Panc1 (cell line): ENCODE measurements at regions of chr22 and their contacts with region 1.

Region 1: DNA sequence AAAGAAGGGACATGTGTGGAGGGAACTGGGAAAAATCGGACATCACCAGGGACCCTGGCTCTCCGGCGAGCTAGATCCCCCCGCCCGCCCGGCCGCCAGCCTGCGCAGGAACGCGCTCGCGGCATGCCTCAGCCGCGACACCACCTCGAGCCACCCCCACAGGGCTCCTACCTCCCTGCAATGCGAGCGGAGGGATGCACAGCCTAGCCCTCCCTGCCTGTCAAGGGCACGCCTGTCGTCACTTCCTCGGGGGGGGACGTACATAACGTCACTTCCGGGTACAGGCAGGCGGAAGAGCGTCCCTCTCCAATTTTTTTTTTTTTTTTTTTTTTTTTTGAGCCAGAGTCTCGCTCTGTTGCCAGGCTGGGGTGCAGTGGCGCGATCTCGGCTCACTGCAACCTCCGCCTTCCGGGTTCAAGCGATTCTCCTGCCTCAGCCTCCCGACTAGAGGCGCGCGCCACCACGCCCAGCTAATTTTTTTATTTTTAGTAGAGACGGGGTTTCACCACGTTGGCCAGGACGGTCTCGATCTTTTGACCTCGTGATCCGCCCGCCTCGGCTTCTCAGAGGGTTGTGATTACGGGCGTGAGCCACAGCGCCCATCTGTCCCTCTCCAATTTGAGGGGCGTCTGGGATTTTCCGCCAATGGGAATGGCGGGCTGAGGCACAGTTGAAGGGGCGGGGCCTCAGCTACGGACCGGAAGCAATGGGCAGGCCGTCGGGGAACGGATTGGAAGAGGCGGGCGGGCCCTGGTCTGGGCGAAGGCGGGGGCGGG is at the start of gene TXN2:
- DNase-seq: no peak
- ATAC-seq: peak; percentile 94
- H3K4me3 ChIP-seq: peak within 1 kb of the TSS; percentile 72 to 93
- H3K27ac ChIP-seq: peak within 1 kb of the TSS; percentile 88
- H3K4me1 ChIP-seq: peaks cover 7% of the 10 kb centered on the region
- H3K27me3 ChIP-seq: no peaks in the 10 kb centered on the region
- CTCF ChIP-seq: no peak
- total RNA-seq, gene TXN2: 64.1 TPM

Region 2: GRCh38 chr22:36350751-36351594 is 130.6 kb before region 1 on chr22:
- CTCF ChIA-PET with region 1: no interaction called
- POLR2A ChIA-PET with region 1: interaction called, 14 read pairs
- in situ Hi-C with region 1: no loop called
- intact Hi-C with region 1: no loop called
- DNase-seq: no peak
- ATAC-seq: peak; percentile 44
- H3K4me3 ChIP-seq: peak overlapping the region in 1 of 2 experiments; percentile 36; a peak in 2 of 4 replicates
- H3K27ac ChIP-seq: peak overlapping the region; percentile 99
- H3K4me1 ChIP-seq: peaks cover 89% of the 10 kb centered on the region
- H3K27me3 ChIP-seq: no peaks in the 10 kb centered on the region
- CTCF ChIP-seq: no peak

Region 3: DNA sequence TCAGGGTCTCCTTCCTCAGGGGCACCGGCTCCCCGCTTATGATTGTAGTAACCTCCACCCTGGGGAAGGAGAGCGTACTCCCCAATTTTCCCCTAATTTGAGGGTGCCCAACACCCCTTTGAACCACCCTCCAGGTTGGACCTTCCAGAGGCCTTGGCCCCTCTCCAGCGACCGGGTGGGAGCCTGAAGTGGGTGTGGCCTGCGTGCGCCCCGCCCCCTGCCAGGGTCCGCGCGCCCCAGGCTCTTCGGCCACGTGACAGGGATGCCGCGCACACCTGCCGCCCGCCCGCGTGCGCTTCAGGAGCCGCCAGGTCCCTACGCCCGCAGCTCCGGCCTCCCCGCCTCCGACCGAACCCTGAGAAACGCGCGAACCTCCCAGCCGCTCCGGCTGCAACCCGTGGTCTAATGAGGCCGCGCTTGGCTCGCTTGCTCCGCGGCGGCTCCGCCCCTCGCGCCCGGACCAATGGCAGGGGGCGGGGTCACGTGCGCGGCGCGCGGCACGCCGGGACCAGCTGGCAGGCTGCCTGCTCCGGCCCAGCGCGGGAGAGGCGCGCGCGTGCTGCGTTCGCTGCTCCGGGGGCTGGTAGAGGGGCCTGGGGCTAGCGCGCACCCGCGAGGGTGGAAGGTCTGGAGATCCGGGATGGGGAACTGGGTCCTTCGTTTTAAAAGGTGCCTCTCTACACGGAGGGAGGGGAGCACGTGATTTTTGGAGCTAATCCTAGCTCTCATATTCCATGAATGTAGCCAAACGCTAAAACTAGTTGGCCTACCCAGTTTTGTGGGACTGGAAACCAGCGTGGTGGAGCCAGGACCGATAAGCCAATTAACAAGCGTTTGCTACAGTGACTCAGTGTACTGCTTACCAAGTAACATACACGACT is 25.3 kb after region 1 on chr22 and contains the start of gene FOXRED2:
- CTCF ChIA-PET with region 1: interaction called, 11 read pairs
- POLR2A ChIA-PET with region 1: interaction called, 4 read pairs
- in situ Hi-C with region 1: no loop called
- intact Hi-C with region 1: no loop called
- DNase-seq: no peak
- ATAC-seq: peak; percentile 88
- H3K4me3 ChIP-seq: peak within 1 kb of the TSS; percentile 48 to 60
- H3K27ac ChIP-seq: peak within 1 kb of the TSS; percentile 80
- H3K4me1 ChIP-seq: no peaks in the 10 kb centered on the region
- H3K27me3 ChIP-seq: no peaks in the 10 kb centered on the region
- CTCF ChIP-seq: no peak
- total RNA-seq, gene FOXRED2: 37.7 TPM

Region 4: GRCh38 chr22:36613958-36614357 is 132.4 kb after region 1 on chr22:
- CTCF ChIA-PET with region 1: no interaction called
- POLR2A ChIA-PET with region 1: no interaction called
- in situ Hi-C with region 1: no loop called
- intact Hi-C with region 1: no loop called
- DNase-seq: no peak
- ATAC-seq: no peak
- H3K4me3 ChIP-seq: no peak overlapping the region
- H3K27ac ChIP-seq: no peak overlapping the region
- H3K4me1 ChIP-seq: no peaks in the 10 kb centered on the region
- H3K27me3 ChIP-seq: no peaks in the 10 kb centered on the region
- CTCF ChIP-seq: no peak

Region 5: DNA sequence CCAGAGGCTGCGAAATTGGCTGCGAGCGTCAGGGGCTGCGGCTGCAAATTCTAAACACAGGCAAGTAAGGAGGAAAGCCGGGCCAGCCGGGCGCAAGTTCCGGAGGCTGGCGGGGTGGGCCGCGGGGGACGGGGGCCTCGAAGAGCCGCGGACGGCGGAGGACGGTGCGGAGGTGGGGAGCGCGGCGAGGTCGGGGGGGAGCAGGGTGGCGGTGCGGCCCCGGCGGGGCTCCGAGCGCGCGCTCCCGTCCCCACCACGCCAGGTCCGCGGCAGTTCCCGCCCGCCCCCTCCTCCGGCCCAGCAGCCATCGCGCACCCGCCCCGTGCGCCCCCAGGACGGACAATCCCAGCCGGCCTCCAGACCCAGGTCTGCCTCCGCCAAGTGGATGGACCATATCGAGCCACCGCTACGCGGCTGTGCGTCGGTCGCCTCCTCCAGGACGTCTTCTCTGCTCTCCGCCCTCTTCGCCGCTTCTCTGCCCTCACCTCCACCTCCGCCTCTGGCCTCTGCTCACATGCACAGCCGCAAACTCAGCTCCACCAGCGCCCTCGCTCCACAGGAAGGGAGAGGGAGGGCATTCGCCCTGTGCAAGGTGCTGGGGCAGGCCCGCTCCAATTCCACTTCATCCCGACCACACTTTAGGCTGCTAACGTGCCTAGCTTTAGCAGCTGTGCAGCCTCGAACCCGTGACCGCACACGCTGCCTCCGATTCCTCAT is 938.5 kb after region 1 on chr22:
- CTCF ChIA-PET with region 1: no interaction called
- POLR2A ChIA-PET with region 1: interaction called, 13 read pairs
- in situ Hi-C with region 1: no loop called
- intact Hi-C with region 1: no loop called
- DNase-seq: no peak
- ATAC-seq: peak; percentile 71
- H3K4me3 ChIP-seq: peak overlapping the region; percentile 48 to 57
- H3K27ac ChIP-seq: peak overlapping the region; percentile 34; the same call in 1 of the 2 replicates
- H3K4me1 ChIP-seq: peaks cover 7% of the 10 kb centered on the region; the same call in 1 of the 2 replicates
- H3K27me3 ChIP-seq: no peaks in the 10 kb centered on the region
- CTCF ChIP-seq: no peak; the same call in 1 of the 2 replicates